IMR-90 (cell line): ENCODE measurements at regions of chr2 and their contacts with region 1.

Region 1: DNA sequence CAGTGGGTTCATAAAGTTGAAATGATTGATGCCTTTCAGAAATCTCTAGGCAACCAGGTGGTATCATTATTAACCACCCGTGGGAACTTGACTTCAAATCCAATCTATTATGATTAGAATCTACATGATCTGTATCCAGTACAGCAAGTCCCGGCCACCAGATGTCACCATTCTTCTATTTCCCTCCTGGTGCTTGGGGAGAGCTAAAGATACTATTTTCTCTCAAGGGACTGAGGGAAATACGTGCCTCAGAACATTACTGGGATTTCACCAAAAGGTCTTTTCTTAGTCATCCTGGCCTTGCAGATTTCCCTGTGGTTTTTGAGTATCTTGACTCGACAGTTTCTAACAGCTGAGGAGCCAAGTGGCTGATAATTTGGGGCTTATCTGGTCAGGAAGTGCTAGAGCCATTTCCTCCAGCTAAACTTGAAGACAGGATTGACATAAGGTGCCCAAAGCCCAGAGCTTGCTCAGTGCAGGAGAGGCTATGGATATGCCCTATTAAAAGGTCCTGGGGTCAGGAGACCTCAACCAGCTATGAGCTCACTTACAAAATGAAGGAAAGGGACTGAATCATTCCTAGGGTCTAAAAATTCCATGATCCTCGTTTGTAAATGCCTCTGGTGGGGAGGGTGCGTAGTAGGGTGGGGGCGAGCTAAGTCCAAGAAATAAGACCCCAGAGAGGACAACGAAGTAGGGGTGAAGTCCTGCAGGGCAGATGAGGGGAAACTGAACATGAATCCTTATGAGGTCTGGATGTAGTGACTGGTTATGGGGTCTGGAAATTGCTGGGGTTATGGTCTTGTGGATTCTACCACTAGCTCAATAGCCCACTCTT is 135.4 kb upstream of the MGAT5 start:
- DNase-seq: peak; percentile 98
- ATAC-seq: peak; percentile 48
- H3K4me3 ChIP-seq: no peak overlapping the region
- H3K27ac ChIP-seq: peak overlapping the region; percentile 77; the same call in 1 of the 2 replicates
- H3K4me1 ChIP-seq: peaks cover 18% of the 10 kb centered on the region
- H3K27me3 ChIP-seq: no peaks in the 10 kb centered on the region
- CTCF ChIP-seq: peak; percentile 95
- POLR2A ChIP-seq: no peak
- RAD21 ChIP-seq: peak; percentile 98

Region 2: DNA sequence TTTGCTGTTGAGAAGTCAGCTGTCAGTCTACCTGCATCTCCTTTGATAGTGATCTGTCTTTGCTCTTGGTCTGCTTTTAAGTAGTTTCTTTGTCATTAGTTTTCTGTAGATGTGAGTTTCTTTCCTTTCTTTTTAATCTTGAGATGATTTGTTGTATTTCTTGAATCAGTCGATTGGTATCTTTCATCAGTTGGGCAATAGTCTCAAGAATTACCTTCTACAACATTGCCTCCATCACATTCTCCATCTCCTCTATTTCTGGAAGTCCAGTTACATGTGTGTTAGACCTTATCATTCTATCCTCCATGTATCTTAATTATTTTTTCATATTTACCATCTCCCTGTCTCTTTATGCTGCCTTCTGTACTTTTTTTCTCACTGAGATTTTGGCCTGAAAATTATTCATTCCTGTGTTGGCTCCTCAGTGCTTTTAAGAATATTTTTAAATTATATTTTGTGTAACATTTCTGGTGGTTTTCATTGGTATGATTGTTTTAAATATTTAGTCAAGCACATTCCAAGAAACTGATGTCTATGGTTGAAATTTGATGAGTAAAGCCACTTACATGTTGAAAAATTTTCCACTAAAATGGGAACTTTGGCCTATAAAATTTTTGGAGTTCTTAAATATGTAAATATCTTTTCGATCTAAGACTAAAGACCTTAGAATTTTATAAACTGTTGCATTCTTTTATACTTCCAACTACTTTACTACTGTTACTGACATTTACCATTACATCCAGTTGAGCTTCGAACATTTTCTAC is 104.1 kb before region 1 on chr2:
- CTCF ChIA-PET with region 1: no interaction called
- POLR2A ChIA-PET with region 1: no interaction called
- dilution Hi-C with region 1: no loop called
- in situ Hi-C with region 1: no loop called
- intact Hi-C with region 1: loop called (anchors 2 kb)
- DNase-seq: peak; percentile 93
- ATAC-seq: peak; percentile 66
- H3K4me3 ChIP-seq: no peak overlapping the region
- H3K27ac ChIP-seq: peak overlapping the region; percentile 99
- H3K4me1 ChIP-seq: peaks cover 30% of the 10 kb centered on the region
- H3K27me3 ChIP-seq: no peaks in the 10 kb centered on the region
- CTCF ChIP-seq: no peak
- POLR2A ChIP-seq: no peak
- RAD21 ChIP-seq: no peak

Region 3: DNA sequence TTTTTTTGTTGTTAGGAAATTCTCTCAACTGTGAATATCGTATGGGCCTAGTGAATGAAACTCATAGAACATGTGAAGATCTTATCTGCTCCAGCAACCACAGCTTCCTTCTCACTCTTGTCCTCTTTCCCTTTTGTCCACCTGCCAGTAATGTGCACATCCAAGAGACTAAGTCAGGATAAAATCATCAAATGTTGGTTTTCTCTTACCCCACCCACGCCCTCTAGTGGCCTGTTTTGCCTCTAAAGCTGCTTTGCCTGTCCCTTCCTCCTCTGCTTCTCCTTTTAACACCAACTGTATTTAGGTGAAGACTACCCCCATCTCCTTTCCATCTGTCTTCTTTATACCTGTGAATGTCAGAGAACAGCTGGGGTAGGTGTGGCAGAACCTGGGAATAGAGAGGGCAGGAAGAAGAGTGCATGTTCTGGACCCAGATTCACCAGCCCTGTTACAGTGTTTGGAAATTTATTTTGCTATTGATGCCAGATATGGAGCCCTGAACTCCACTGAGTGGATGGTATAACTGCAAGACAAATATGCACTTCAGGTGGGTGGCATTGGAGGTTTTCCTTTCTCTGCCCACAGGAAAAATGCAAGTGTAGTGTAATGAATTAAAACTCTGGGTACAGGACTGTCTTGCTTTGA is 127.0 kb after region 1 on chr2:
- CTCF ChIA-PET with region 1: interaction called, 4 read pairs
- POLR2A ChIA-PET with region 1: no interaction called
- dilution Hi-C with region 1: no loop called
- in situ Hi-C with region 1: no loop called
- intact Hi-C with region 1: loop called (anchors 1 kb)
- DNase-seq: peak; percentile 71
- ATAC-seq: peak; percentile 52
- H3K4me3 ChIP-seq: no peak overlapping the region
- H3K27ac ChIP-seq: no peak overlapping the region
- H3K4me1 ChIP-seq: peaks cover 11% of the 10 kb centered on the region
- H3K27me3 ChIP-seq: no peaks in the 10 kb centered on the region
- CTCF ChIP-seq: peak; percentile 74
- POLR2A ChIP-seq: no peak
- RAD21 ChIP-seq: peak; percentile 77

Region 4: GRCh38 chr2:134452042-134452733 is 333.7 kb after region 1 on chr2:
- CTCF ChIA-PET with region 1: interaction called, 20 read pairs
- POLR2A ChIA-PET with region 1: no interaction called
- dilution Hi-C with region 1: no loop called
- in situ Hi-C with region 1: no loop called
- intact Hi-C with region 1: loop called (anchors 2 kb)
- DNase-seq: no peak
- ATAC-seq: no peak
- H3K4me3 ChIP-seq: no peak overlapping the region
- H3K27ac ChIP-seq: no peak overlapping the region
- H3K4me1 ChIP-seq: no peaks in the 10 kb centered on the region
- H3K27me3 ChIP-seq: no peaks in the 10 kb centered on the region
- CTCF ChIP-seq: no peak
- POLR2A ChIP-seq: no peak
- RAD21 ChIP-seq: no peak